PC-9 (cell line): ENCODE measurements at regions of chr6 and their contacts with region 1.

Region 1: GRCh38 chr6:46419576-46420002 is 71.7 kb downstream of the RCAN2 start:
- DNase-seq: peak in 1 of 2 experiments; percentile 48
- H3K4me3 ChIP-seq: no peak overlapping the region
- H3K27ac ChIP-seq: no peak overlapping the region
- H3K4me1 ChIP-seq: peaks cover 11% of the 10 kb centered on the region; the same call in 1 of the 2 replicates
- H3K27me3 ChIP-seq: no peaks in the 10 kb centered on the region
- CTCF ChIP-seq: peak; percentile 83

Region 2: DNA sequence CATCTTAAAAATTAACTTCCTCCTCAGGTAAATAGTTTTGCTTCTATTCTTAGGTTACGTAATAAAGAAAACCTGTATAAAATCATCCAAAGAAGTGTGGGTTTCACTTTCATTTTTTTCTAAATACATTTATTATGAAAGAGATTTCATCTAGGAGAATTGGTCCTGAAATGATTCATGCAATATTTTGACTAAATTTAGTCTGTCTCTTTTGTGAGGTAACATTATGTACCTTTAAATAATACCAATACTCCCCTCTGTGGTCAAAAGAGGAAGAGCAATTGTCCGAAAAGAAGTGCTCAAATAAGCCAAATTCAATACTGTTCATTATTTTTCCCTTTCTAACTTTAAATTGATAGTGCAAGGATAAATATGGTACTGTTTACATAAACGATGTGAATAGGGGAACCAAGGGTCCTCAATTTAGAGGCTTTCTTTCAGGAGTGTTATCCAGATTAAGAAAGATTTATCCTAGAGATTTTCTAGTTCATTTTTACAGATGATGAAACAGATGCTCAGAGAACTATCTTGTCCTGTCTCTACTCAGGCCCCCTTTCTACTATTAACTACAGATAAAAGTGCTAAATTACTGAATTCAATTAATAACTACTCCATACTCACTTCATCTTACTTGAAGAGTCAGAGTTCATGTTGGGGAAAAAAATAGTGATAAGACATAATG is 206.8 kb after region 1 on chr6:
- CTCF ChIA-PET with region 1: no interaction called
- POLR2A ChIA-PET with region 1: no interaction called
- intact Hi-C with region 1: loop called (anchors 1 kb)
- DNase-seq: peak in 1 of 2 experiments; percentile 61
- H3K4me3 ChIP-seq: no peak overlapping the region
- H3K27ac ChIP-seq: no peak overlapping the region
- H3K4me1 ChIP-seq: peaks cover 7% of the 10 kb centered on the region; the same call in 1 of the 2 replicates
- H3K27me3 ChIP-seq: no peaks in the 10 kb centered on the region
- CTCF ChIP-seq: peak; percentile 77

Region 3: DNA sequence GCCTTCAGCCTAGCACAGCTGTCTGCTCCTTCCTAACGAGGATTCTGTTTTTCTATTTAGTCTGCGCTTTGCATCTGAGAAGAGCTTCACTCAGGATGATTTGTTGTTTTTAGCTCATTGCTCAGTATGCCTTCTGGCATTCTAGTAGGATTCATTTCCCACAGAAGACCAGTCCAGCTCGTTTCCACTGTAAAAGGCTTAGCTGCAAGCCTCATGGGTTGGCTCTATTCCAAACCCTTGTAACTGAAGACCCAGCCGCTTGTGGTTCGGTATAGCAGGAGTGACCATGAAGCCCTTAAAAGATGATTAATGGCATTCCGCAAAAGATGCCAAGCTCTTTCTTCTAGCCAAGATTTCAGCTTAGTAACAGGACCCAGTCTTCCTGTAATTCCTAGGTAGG is 615.3 kb after region 1 on chr6:
- CTCF ChIA-PET with region 1: no interaction called
- POLR2A ChIA-PET with region 1: no interaction called
- intact Hi-C with region 1: loop called (anchors 5 kb)
- DNase-seq: peak; percentile 83 to 99
- H3K4me3 ChIP-seq: peak overlapping the region; percentile 41; the same call in 1 of the 2 replicates
- H3K27ac ChIP-seq: peak overlapping the region; percentile 98
- H3K4me1 ChIP-seq: peaks cover 68% of the 10 kb centered on the region
- H3K27me3 ChIP-seq: no peaks in the 10 kb centered on the region
- CTCF ChIP-seq: no peak

Region 4: DNA sequence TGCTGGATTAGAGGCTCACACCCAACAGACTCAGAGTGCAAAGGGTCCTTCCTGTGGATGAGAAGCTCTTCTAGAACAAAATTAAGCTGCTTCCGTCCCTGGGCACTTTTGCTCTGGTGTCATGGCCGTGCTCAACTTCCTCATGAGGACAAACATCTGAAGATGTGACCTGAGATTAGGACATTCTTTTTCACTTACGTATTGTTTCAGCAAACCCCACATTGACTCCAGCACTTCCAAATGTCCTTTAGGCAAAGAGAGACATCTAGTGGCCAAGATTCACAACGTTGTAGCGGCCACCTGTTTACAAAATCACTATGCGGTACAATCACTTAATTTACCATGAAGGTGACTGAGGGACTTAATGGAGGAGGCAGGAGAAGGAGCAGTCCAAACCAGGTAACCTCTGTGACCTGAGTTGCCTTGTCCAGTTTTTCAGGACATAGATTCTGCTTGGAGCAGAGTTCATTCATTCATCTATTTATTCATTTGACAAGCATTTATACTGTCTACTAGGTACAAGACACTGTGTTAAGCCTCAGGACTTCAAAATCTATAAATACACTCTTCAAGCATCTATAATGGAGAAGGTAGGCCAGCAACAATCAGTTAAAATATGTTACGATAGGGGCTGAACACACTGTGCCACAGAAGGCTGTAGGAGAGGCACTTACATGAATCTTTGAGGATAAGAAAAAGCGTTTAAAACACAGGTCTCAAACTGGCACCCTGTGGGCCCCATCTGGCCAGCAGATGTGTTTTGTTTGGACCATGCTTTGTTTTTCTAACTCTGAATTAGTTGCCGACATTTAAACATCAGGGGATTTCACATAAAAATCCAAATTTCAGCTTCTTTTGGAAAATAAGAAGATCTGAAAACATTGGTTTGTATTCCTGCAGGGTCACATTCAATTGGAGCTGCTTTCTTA is 628.2 kb after region 1 on chr6:
- CTCF ChIA-PET with region 1: no interaction called
- POLR2A ChIA-PET with region 1: interaction called, 3 read pairs
- intact Hi-C with region 1: loop called (anchors 1 kb)
- DNase-seq: peak; percentile 72 to 99
- H3K4me3 ChIP-seq: no peak overlapping the region; the same call in 1 of the 2 replicates
- H3K27ac ChIP-seq: peak overlapping the region; percentile 98
- H3K4me1 ChIP-seq: peaks cover 60% of the 10 kb centered on the region
- H3K27me3 ChIP-seq: no peaks in the 10 kb centered on the region
- CTCF ChIP-seq: peak; percentile 80